MCF 10A (cell line): ENCODE measurements at regions of chr1 and their contacts with region 1.

Region 1: GRCh38 chr1:41891199-41891896 is 27.4 kb downstream of the HIVEP3 start:
- DNase-seq: peak; percentile 45
- H3K4me3 Mint-ChIP-seq: peak overlapping the region; percentile 60
- H3K27ac Mint-ChIP-seq: peak overlapping the region; percentile 5
- H3K4me1 Mint-ChIP-seq: peaks cover 21% of the 10 kb centered on the region
- H3K27me3 Mint-ChIP-seq: no peaks in the 10 kb centered on the region
- CTCF ChIP-seq: no peak

Region 2: DNA sequence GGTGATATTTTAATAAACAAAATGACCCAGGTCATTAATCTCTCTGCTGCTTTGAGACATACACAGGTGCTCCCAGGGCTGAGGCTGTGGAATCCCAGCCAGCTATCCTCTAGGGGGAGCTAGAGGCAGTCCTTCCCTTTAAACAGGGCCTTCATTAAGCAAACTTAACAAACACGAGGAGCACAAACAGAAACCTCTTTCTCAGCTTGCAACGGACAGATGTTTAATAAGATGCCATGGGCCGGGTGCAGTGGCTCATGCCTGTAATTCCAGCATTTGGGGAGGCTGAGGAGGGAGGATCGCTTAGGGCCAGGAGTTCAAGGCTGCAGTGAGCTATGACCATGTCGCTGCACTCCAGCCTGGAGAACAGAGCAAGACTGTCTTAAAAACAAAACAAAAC is 79.3 kb before region 1 on chr1:
- CTCF ChIA-PET with region 1: no interaction called
- POLR2A ChIA-PET with region 1: no interaction called
- intact Hi-C with region 1: loop called (anchors 1 kb)
- DNase-seq: peak; percentile 79
- H3K4me3 Mint-ChIP-seq: no peak overlapping the region
- H3K27ac Mint-ChIP-seq: no peak overlapping the region
- H3K4me1 Mint-ChIP-seq: peaks cover 7% of the 10 kb centered on the region
- H3K27me3 Mint-ChIP-seq: no peaks in the 10 kb centered on the region
- CTCF ChIP-seq: peak; percentile 59